ENCODE measurements at regions of chr11 and their contacts with region 1.

Region 1: DNA sequence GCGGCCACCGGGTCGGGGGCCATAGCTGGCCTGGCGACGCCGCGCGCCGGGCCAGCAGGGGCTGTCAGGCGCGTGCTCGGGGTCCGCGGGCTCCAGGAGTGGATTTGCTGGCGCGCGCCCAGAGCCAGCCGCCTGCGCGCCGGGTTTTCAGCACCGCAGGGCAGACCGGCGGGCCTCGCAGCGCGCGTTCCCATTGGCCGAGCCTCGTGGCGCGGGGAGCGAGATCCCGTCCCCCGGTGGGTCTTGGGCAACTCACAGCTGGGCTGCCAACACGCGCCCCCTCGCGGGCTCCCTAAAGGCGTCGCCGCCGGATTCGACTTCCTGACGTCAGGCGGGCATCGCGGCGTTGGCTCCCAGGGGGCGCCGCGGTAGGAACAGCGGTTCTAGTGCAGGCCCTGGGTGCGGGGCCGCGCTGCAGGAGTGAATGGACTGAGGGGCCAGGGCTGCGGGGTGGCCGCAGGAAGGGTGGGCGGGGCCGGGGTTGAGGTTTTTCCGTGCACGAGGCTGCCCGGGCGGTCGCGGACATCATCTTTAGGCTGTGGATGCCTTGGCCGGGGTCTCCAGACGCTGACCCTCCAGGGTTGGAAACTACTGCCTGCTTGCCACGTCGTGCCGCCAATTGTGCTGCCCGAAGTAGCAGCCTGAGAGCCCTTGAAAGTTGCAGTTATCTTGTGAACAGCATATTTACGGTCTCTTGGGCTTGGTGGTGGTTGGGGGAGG is at the start of gene FADS1:
- DNase-seq: peak; percentile 86
- ATAC-seq: peak; percentile 69
- H3K4me3 Mint-ChIP-seq: peak within 1 kb of the TSS; percentile 98
- H3K27ac Mint-ChIP-seq: peak within 1 kb of the TSS; percentile 94
- H3K4me1 Mint-ChIP-seq: peaks cover 12% of the 10 kb centered on the region
- H3K27me3 Mint-ChIP-seq: peaks cover 23% of the 10 kb centered on the region
- total RNA-seq, gene FADS1: 53.2 to 54.7 TPM

Region 2: DNA sequence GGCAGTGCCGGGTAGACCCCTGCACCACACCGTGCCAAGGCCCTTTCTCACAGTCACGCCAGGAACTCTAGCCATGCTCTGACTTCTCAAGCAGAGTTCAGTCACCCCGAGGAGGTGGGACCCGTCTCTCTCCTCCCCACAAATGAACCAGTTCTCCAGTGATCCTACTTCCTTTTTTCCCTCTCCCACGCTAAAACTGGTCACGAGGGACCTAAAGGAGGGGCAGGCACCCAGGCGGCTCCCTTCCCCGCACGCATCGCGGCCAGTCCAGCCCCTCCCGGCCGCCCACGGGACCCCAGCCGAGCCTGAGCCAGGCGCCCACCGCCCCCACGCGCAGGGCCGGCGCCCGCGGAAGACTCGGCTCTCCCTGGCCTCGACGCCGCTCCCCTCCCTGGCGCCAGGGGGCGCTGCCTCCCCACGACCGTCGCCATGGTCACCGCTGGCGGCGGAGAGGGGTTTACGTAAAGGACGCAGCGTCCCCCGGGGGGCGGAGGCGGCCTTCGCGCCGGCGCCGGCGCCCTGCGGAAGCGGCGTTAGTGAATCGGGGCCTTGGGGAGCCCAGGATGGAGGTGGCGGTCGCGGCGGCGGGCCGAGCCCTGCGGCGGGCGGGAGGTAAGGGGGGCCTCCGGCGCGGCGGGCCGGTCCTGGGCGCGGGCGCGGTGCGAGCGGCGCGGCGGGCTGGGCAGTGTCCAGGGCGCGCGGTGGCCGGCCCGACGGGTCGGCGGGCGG is 136.8 kb before region 1 on chr11 and contains the start of gene DAGLA:
- POLR2A ChIA-PET with region 1: no interaction called
- DNase-seq: peak; percentile 91
- ATAC-seq: peak; percentile 70
- H3K4me3 Mint-ChIP-seq: peak within 1 kb of the TSS; percentile 57
- H3K27ac Mint-ChIP-seq: no peak within 1 kb of the TSS
- H3K4me1 Mint-ChIP-seq: peaks cover 3% of the 10 kb centered on the region
- H3K27me3 Mint-ChIP-seq: peaks cover 28% of the 10 kb centered on the region
- total RNA-seq, gene DAGLA: 0.08 to 0.14 TPM

Region 3: GRCh38 chr11:61792310-61793085 is 24.4 kb before region 1 on chr11 and contains the starts of genes FEN1 and TMEM258:
- POLR2A ChIA-PET with region 1: interaction called, 34 read pairs
- DNase-seq: peak; percentile 92
- ATAC-seq: peak; percentile 91
- H3K4me3 Mint-ChIP-seq: peak within 1 kb of the TSS; percentile 91
- H3K27ac Mint-ChIP-seq: peak within 1 kb of the TSS; percentile 99
- H3K4me1 Mint-ChIP-seq: peaks cover 49% of the 10 kb centered on the region
- H3K27me3 Mint-ChIP-seq: no peaks in the 10 kb centered on the region
- total RNA-seq, gene FEN1: 87.1 to 88.7 TPM
- total RNA-seq, gene TMEM258: 127 to 140 TPM

Region 4: GRCh38 chr11:61800331-61801281 is 16.3 kb before region 1 on chr11:
- POLR2A ChIA-PET with region 1: interaction called, 24 read pairs
- DNase-seq: no peak
- ATAC-seq: no peak
- H3K4me3 Mint-ChIP-seq: no peak overlapping the region
- H3K27ac Mint-ChIP-seq: peak overlapping the region; percentile 8
- H3K4me1 Mint-ChIP-seq: peaks cover 22% of the 10 kb centered on the region
- H3K27me3 Mint-ChIP-seq: no peaks in the 10 kb centered on the region

Region 5: GRCh38 chr11:61827571-61828378 is 10.9 kb after region 1 on chr11 and contains the start of gene FADS2:
- POLR2A ChIA-PET with region 1: interaction called, 140 read pairs
- DNase-seq: peak; percentile 92
- ATAC-seq: peak; percentile 88
- H3K4me3 Mint-ChIP-seq: peak within 1 kb of the TSS; percentile 94
- H3K27ac Mint-ChIP-seq: peak within 1 kb of the TSS; percentile 89
- H3K4me1 Mint-ChIP-seq: peaks cover 38% of the 10 kb centered on the region
- H3K27me3 Mint-ChIP-seq: peaks cover 14% of the 10 kb centered on the region
- total RNA-seq, gene FADS2: 245 to 280 TPM

Region 6: GRCh38 chr11:61834278-61835048 is 17.6 kb after region 1 on chr11:
- POLR2A ChIA-PET with region 1: interaction called, 140 read pairs
- DNase-seq: peak; percentile 76
- ATAC-seq: peak; percentile 99
- H3K4me3 Mint-ChIP-seq: peak overlapping the region; percentile 83
- H3K27ac Mint-ChIP-seq: peak overlapping the region; percentile 96
- H3K4me1 Mint-ChIP-seq: peaks cover 53% of the 10 kb centered on the region
- H3K27me3 Mint-ChIP-seq: no peaks in the 10 kb centered on the region